SK-N-SH (cell line): ENCODE measurements at regions of chr9 and their contacts with region 1.

Region 1: DNA sequence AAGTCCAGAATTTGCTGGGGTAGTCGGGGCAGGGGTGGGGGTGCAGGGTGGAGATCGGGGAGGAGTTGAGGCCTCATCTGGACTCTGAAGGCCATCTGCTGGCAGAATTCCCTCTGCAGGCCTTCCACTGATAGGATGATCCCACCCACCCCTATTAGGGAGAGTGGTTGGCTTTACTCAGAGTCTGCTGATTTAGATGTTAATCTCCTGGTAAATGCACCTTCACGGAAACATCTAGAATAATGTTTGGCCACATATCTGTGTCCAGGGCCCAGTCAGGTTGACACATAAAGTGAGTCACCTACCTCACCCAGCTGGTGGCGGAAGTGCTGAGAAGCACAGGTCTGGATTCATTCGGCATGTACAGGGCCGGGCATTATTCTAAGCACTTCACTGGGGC is 50.0 kb downstream of the DAPK1 start:
- DNase-seq: peak; percentile 59
- H3K4me3 ChIP-seq: no peak overlapping the region
- H3K27ac ChIP-seq: peak overlapping the region in 1 of 2 experiments; percentile 60; a peak in 2 of 4 replicates
- H3K4me1 ChIP-seq: peaks cover 11 to 14% of the 10 kb centered on the region in 2 experiments; a peak in 2 of 4 replicates
- H3K27me3 ChIP-seq: no peaks in the 10 kb centered on the region
- CTCF ChIP-seq: no peak
- EP300 ChIP-seq: peak in 1 of 2 experiments; percentile 18; a peak in 1 of 4 replicates
- RAD21 ChIP-seq: no peak; the same call in 1 of the 2 replicates

Region 2: DNA sequence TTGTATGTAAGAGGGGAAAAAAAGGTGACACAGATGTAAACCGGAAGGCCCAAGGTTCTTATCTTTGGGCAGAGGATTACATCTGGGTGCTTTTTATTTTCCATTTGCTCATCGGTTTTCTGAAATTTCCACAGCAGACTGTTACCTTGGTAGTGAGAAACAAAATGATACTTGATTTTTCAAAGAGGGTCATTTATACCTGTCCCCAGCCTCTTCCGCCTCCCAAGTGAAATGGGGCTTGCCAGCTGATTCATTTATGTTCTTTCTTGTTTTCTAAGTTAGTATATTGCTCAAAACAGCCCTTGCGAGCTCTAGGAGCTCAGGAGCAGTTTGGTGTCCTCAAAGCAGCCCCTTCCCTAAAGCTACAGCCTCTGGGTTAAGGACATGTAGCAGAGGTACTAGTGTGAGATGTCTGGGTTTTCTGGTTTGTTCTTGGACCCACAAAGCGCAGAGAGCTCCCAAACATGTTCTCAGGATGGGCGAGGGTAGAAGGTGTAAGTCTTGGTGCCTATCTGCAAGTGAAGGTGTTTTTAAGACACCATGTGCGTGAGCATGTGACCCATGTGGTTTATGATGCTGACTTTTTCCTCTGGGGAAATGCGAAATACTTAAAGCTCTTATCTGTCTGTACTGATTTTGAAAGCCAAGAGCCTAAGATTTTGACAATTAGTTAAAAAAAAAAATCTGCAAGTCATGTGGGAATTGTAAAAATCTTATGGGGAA is 11.7 kb before region 1 on chr9:
- CTCF ChIA-PET with region 1: interaction called, 15 read pairs
- POLR2A ChIA-PET with region 1: no interaction called
- DNase-seq: no peak
- H3K4me3 ChIP-seq: no peak overlapping the region
- H3K27ac ChIP-seq: peak overlapping the region in 1 of 2 experiments; percentile 79; a peak in 2 of 4 replicates
- H3K4me1 ChIP-seq: peaks cover 9 to 30% of the 10 kb centered on the region in 2 experiments; a peak in 3 of 4 replicates
- H3K27me3 ChIP-seq: no peaks in the 10 kb centered on the region
- CTCF ChIP-seq: no peak
- EP300 ChIP-seq: no peak
- RAD21 ChIP-seq: no peak